ENCODE measurements at regions of chr13 and their contacts with region 1.

Region 1: GRCh38 chr13:109154966-109155761 is 525.8 kb downstream of the MYO16 start:
- DNase-seq: no peak
- H3K4me3 ChIP-seq: no peak overlapping the region
- H3K27ac ChIP-seq: no peak overlapping the region
- H3K4me1 ChIP-seq: peaks cover 59% of the 10 kb centered on the region
- H3K27me3 ChIP-seq: no peaks in the 10 kb centered on the region
- CTCF ChIP-seq: no peak

Region 2: DNA sequence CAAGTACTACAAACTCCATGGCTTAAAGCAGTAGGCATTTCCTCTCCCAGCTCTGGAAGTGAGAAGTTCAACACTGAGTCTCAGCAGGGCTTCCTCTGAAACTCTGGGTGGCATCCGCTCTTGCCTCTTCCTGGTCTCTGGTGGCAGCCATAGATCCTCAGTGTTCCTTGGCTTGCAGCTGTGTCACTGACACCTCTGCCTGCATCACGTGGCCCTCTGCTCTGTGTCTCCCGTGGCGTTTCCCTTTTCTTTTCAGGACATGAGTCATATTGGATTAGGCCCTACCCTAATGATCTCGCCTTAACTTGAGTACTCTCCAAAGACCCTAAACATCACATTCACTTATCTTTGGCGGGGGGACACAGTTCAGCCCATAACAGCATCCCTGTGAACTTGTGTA is 59.1 kb before region 1 on chr13:
- CTCF ChIA-PET with region 1: no interaction called
- POLR2A ChIA-PET with region 1: interaction called, 3 read pairs
- intact Hi-C with region 1: loop called (anchors 2 kb)
- DNase-seq: peak; percentile 96
- H3K4me3 ChIP-seq: no peak overlapping the region
- H3K27ac ChIP-seq: peak overlapping the region; percentile 53
- H3K4me1 ChIP-seq: peaks cover 21% of the 10 kb centered on the region
- H3K27me3 ChIP-seq: no peaks in the 10 kb centered on the region
- CTCF ChIP-seq: no peak

Region 3: GRCh38 chr13:109274188-109274821 is 119.1 kb after region 1 on chr13:
- CTCF ChIA-PET with region 1: no interaction called
- POLR2A ChIA-PET with region 1: no interaction called
- intact Hi-C with region 1: loop called (anchors 5 kb)
- DNase-seq: peak; percentile 43
- H3K4me3 ChIP-seq: peak overlapping the region; percentile 18
- H3K27ac ChIP-seq: no peak overlapping the region
- H3K4me1 ChIP-seq: peaks cover 18% of the 10 kb centered on the region
- H3K27me3 ChIP-seq: no peaks in the 10 kb centered on the region
- CTCF ChIP-seq: no peak

Region 4: DNA sequence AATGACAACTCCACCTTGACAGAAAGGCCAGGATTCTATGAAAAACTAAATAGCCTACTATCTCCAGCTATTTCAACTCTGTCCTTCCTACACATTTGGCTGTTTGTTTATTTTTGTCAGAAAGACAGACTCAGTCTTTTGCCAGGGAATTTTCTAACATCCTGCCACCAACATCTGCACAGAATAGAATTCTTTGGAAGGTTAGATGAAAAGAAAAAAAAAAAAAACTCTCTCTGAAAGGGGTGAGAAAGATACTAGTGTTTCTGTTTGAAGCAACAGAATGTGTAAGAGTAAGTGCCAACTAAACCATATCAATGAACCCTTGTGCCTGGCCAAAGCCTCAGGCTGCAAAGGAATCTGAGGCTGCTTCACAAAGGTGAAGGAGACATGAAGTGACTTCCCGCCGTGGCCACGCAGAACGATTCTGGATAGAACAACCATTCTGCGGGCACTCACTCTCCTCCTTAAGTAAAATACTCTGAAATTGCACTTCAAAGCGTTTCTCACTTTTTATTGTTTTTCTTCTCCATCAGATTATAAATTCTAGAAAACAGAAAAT is 133.1 kb after region 1 on chr13:
- CTCF ChIA-PET with region 1: no interaction called
- POLR2A ChIA-PET with region 1: no interaction called
- intact Hi-C with region 1: no loop called
- DNase-seq: no peak
- H3K4me3 ChIP-seq: no peak overlapping the region
- H3K27ac ChIP-seq: no peak overlapping the region
- H3K4me1 ChIP-seq: no peaks in the 10 kb centered on the region
- H3K27me3 ChIP-seq: no peaks in the 10 kb centered on the region
- CTCF ChIP-seq: no peak